Panc1 (cell line): ENCODE measurements at regions of chr6 and their contacts with region 1.

Region 1: GRCh38 chr6:77463861-77464494 is 687 bp upstream of the HTR1B start:
- DNase-seq: no peak
- ATAC-seq: peak; percentile 31
- H3K4me3 ChIP-seq: peak overlapping the region; percentile 68 to 91
- H3K27ac ChIP-seq: peak overlapping the region; percentile 91
- H3K4me1 ChIP-seq: peaks cover 17% of the 10 kb centered on the region
- H3K27me3 ChIP-seq: no peaks in the 10 kb centered on the region; the same call in 1 of the 2 replicates
- CTCF ChIP-seq: no peak

Region 2: DNA sequence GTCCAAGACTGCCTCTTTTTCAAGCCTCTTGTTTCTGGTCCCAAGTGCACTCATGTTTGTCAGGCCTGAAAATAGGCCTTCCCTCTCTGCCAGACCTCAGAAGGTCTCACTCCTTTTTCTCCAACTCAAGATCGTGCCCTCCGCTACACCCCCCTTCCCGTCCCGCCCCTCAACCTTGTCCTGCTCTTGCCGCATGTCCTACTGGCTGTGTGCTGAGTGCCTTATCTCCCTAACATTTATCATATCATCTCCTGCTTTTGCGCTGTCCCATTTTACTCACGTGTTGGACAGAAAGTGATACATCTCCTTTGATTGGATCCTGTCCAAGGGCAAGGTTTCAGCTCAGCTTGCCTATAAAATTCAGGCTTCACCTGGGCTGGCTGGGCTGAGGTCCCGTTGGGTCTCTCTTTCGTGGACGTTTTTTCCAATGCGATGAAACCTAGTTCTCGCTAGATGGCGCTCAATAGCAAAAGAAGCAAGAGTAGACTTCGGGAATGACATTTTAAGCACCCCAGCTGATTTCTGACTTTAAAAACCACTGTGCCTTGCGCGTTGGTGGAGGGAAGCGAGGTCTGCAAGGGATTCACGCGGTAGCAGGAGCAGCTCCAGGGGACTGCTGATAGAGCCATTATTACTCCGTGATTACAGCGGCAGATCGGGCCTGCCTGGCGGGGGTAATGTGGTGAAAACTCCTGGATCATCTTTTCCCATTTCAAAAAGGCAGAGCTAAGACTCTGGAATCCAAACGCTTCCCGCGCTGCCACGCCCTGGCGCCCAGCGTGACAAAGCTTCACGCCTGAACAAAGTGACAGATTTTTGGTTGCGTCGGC is 1529.1 kb before region 1 on chr6:
- CTCF ChIA-PET with region 1: no interaction called
- POLR2A ChIA-PET with region 1: no interaction called
- in situ Hi-C with region 1: no loop called
- intact Hi-C with region 1: loop called (anchors 2 kb)
- DNase-seq: peak; percentile 33
- ATAC-seq: peak; percentile 84
- H3K4me3 ChIP-seq: peak overlapping the region; percentile 22 to 55
- H3K27ac ChIP-seq: no peak overlapping the region; the same call in 1 of the 2 replicates
- H3K4me1 ChIP-seq: no peaks in the 10 kb centered on the region; the same call in 1 of the 2 replicates
- H3K27me3 ChIP-seq: no peaks in the 10 kb centered on the region
- CTCF ChIP-seq: peak; percentile 86

Region 3: GRCh38 chr6:76418557-76419223 is 1045.3 kb before region 1 on chr6:
- CTCF ChIA-PET with region 1: no interaction called
- POLR2A ChIA-PET with region 1: interaction called, 10 read pairs
- in situ Hi-C with region 1: no loop called
- intact Hi-C with region 1: no loop called
- DNase-seq: no peak
- ATAC-seq: no peak
- H3K4me3 ChIP-seq: no peak overlapping the region
- H3K27ac ChIP-seq: no peak overlapping the region
- H3K4me1 ChIP-seq: no peaks in the 10 kb centered on the region
- H3K27me3 ChIP-seq: no peaks in the 10 kb centered on the region
- CTCF ChIP-seq: no peak